Lower leg skin (tissue), 4 donors: ENCODE measurements at regions of chr7 and their contacts with region 1.

Region 1: GRCh38 chr7:56063882-56064625 is at the start of gene SUMF2:
- DNase-seq: peak; percentile 84 to 98
- H3K4me3 ChIP-seq: peak within 1 kb of the TSS; percentile 79
- CTCF ChIP-seq: no peak
- POLR2A ChIP-seq: no peak
- total RNA-seq, gene SUMF2: 74.5 to 117 (median 107) TPM

Region 2: GRCh38 chr7:55827577-55827976 is 236.5 kb before region 1 on chr7:
- intact Hi-C with region 1: loop called (anchors 5 kb)
- DNase-seq: no peak
- H3K4me3 ChIP-seq: no peak overlapping the region
- CTCF ChIP-seq: no peak
- POLR2A ChIP-seq: no peak